Right ventricle myocardium inferior (tissue), 1 donor: ENCODE measurements at regions of chr14 and their contacts with region 1.

Region 1: DNA sequence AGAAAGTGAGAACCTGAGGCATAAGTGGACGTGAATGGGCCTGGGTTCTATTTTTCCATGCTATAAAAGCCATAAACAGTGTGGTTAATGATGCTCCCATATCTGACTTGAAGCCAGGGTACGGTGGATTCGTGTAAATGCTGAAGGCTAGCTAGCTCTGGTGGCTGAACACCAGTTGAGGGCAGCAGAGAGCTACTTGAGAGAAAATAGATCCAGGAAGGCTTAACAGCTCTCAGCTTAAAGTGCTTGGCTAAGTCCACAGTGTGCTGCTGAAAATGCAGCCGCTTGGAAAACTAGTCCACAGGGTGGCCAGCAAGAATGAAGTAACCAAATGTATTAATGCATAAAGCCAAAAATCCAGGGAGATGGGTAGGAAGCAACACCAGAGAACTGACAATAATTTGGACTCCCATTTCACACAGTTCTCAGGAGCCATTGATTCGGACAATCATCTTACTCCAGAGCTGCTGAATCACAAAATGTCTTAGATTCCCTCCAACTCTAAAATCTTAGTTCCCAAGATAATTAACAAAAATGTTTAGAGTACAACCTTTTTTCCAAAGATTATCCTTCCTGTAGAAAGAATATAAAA is 15.0 kb upstream of the FOXG1 start:
- DNase-seq: no peak
- ATAC-seq: no peak

Region 2: GRCh38 chr14:29536886-29537511 is 785.4 kb after region 1 on chr14:
- intact Hi-C with region 1: loop called (anchors 5 kb)
- DNase-seq: no peak
- ATAC-seq: no peak

Region 3: DNA sequence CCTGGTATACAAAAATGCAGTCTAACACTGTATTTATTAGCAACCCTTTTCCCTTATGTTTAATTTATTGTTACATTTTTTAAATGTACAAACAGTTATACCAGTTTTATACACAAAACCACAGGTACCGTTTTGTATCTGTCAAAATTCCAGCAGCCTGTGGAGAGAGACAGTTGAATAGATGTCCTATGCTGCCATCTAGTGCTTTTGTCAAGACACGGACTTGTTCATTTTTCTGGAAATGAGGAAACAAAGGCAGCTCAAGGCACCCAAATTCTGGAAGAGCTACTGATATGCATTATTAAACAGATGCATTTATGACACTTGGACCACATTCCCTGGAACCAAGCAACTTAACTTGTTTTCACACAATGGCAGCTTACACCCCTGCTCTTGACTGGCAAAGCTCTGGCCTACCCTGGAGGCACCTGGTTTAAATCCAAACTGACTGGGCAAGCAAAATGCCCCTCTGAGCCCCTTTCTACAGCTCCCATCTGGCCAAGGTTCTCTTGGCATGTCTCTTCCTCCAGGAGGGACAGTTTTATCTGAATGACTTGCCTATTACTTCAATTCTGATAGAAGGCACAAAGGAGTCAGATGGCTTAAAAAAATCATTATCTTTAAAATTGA is 1463.0 kb after region 1 on chr14:
- intact Hi-C with region 1: loop called (anchors 5 kb)
- DNase-seq: no peak
- ATAC-seq: peak; percentile 44